ENCODE measurements at regions of chr1 and their contacts with region 1.

Region 1: DNA sequence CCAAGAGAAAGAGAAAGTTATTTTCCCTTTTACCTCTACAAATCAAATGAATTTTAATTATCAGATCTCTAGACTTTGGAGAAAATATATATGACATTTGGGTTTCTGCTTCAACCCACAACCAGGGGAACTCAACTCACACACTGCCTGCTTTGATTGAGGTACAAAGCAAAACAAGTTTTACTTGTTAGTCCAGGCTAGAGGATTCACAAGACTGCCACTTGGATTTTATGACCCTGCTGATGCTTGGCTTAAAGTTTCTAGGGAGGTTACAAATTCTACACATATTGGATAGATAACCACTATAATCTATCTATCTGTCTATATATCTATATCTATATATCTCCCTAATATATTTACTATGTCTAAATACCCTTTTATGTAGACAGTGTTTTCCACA is 467.3 kb upstream of the RGS18 start:
- DNase-seq: no peak
- H3K4me3 ChIP-seq: no peak overlapping the region
- H3K27ac ChIP-seq: no peak overlapping the region
- H3K4me1 ChIP-seq: no peaks in the 10 kb centered on the region
- H3K27me3 ChIP-seq: no peaks in the 10 kb centered on the region
- CTCF ChIP-seq: no peak
- POLR2A ChIP-seq: no peak

Region 2: GRCh38 chr1:190563243-190563642 is 1127.7 kb before region 1 on chr1:
- intact Hi-C with region 1: loop called (anchors 5 kb)
- DNase-seq: no peak
- H3K4me3 ChIP-seq: no peak overlapping the region
- H3K27ac ChIP-seq: no peak overlapping the region
- H3K4me1 ChIP-seq: no peaks in the 10 kb centered on the region
- H3K27me3 ChIP-seq: no peaks in the 10 kb centered on the region
- CTCF ChIP-seq: no peak
- POLR2A ChIP-seq: no peak